Right ventricle myocardium inferior (tissue), 1 donor: ENCODE measurements at regions of chr4 and their contacts with region 1.

Region 1: DNA sequence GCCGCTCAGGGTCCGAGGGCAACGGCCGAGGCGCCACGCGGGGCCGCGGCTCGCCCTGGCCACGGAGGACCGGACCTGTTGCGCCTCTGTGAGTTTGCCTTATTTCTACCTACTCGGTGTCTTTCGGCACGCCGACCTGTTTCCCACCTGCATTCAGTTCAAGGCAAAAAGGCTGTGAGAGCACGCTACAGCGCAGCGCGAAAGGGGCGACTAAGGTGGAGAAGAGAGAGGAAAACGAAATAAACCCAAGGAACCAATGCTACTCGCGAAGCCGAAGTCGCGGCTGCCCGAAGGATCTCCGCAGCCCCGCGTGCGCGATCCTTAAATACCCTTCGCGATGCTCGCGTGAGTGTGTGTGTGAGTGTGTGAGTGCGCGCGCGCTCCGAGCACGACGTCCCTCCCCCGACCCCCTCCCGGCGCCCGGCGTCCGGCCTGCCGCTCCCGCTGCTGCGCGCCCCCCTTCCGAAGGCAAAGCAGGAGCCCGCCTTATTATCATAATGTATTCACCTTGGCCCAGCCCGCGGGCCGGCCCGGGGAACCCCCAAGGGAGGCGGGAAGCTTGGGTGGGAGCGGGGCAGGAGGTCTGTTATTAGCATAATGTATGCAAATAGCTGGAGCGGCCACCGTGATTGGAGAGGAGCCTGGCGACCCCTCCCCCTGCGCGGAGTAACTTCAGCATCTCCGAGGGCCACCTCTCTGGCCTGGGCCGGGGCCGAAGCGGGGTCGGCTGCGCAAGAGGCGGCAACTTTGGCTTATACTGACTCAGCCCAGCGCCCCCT is at the start of gene COL25A1:
- DNase-seq: peak; percentile 72
- ATAC-seq: peak; percentile 63
- total RNA-seq, gene COL25A1: 0.73 TPM

Region 2: DNA sequence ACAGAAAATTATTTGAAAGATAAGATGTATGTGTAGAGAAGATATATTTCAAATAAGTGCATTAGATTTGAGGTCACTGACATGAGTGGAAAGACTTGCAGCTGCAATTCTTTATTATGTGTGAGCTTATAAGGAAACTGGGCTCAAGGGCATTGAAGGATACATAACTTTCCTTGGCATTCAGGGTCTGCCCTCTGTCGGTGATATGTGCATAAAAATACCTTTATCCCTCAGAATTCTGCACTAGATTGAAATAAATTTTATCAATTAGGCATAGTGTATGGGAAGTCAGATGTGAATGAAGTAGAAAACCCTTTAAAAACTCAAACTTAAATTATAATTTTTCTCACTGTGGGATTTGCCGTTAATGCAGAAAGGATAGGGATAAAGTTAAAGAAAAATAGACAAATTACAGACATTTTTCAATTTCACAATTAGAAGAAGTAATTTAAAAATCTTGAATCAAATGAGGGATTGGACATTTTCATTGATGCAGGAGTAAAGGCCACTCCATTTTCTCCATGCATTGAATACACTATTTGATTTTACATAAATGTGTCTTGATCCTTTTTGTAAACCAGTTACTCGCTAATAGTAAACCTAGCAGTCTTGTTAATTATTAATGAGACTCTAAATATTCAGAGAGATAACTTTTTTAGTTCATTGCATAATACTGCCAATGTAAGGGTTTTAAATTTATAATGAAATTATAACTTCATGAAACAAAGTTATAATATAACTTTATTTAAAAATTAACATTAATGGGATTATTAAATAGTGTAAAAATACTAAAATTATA is 518.7 kb before region 1 on chr4:
- intact Hi-C with region 1: no loop called
- DNase-seq: no peak
- ATAC-seq: no peak

Region 3: GRCh38 chr4:109067508-109068210 is 234.9 kb before region 1 on chr4:
- intact Hi-C with region 1: loop called (anchors 10 kb)
- DNase-seq: peak; percentile 67
- ATAC-seq: peak; percentile 78

Region 4: DNA sequence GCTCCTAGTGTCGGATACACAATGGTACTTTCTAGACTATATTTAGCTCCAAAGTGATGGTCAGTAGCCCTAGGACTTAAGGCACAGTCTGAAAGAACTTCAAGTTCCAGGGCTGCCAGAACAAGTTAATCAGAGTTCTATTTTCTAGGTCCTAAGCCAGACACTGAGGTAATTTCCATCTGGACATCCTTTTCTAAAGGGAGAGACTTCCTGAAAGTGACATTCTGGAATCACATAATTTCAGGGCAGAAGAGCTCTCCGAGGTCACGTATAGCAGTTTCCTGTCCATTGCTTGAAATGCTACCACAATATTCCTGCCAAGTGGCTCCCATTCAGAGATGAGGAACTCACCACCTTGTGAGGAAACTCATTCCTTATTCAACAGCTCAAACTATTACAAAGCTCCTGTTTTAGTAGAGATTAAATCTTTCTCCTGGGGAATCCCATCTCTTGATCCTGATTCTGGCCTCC is 118.0 kb before region 1 on chr4:
- intact Hi-C with region 1: loop called (anchors 10 kb)
- DNase-seq: no peak
- ATAC-seq: peak; percentile 95

Region 5: GRCh38 chr4:109966891-109967481 is 664.4 kb after region 1 on chr4:
- intact Hi-C with region 1: no loop called
- DNase-seq: no peak
- ATAC-seq: no peak